ENCODE measurements at regions of chr16 and their contacts with region 1.

Region 1: GRCh38 chr16:68040507-68041288 is 17.6 kb downstream of the DUS2 start:
- DNase-seq: peak; percentile 92
- ATAC-seq: peak; percentile 99
- H3K4me3 Mint-ChIP-seq: no peak overlapping the region
- H3K27ac Mint-ChIP-seq: peak overlapping the region; percentile 81
- H3K4me1 Mint-ChIP-seq: peaks cover 31% of the 10 kb centered on the region
- H3K27me3 Mint-ChIP-seq: no peaks in the 10 kb centered on the region

Region 2: GRCh38 chr16:67942200-67942509 is 98.5 kb before region 1 on chr16:
- CTCF ChIA-PET with region 1: interaction called, 13 read pairs
- DNase-seq: peak; percentile 59
- ATAC-seq: peak; percentile 60
- H3K4me3 Mint-ChIP-seq: no peak overlapping the region
- H3K27ac Mint-ChIP-seq: no peak overlapping the region
- H3K4me1 Mint-ChIP-seq: peaks cover 30% of the 10 kb centered on the region
- H3K27me3 Mint-ChIP-seq: no peaks in the 10 kb centered on the region

Region 3: GRCh38 chr16:67993189-67994039 is 47.3 kb before region 1 on chr16:
- CTCF ChIA-PET with region 1: interaction called, 22 read pairs
- DNase-seq: peak; percentile 88
- ATAC-seq: peak; percentile 91
- H3K4me3 Mint-ChIP-seq: peak overlapping the region; percentile 63
- H3K27ac Mint-ChIP-seq: peak overlapping the region; percentile 96
- H3K4me1 Mint-ChIP-seq: peaks cover 34% of the 10 kb centered on the region
- H3K27me3 Mint-ChIP-seq: no peaks in the 10 kb centered on the region

Region 4: GRCh38 chr16:68022704-68023522 is 17.8 kb before region 1 on chr16 and contains the starts of genes DDX28 and DUS2:
- CTCF ChIA-PET with region 1: interaction called, 20 read pairs
- DNase-seq: peak; percentile 95
- ATAC-seq: peak; percentile 96
- H3K4me3 Mint-ChIP-seq: peak within 1 kb of the TSS; percentile 93
- H3K27ac Mint-ChIP-seq: peak within 1 kb of the TSS; percentile 91
- H3K4me1 Mint-ChIP-seq: peaks cover 36% of the 10 kb centered on the region
- H3K27me3 Mint-ChIP-seq: no peaks in the 10 kb centered on the region
- total RNA-seq, gene DDX28: 14.8 to 20.8 TPM
- total RNA-seq, gene DUS2: 28.4 to 32.0 TPM

Region 5: DNA sequence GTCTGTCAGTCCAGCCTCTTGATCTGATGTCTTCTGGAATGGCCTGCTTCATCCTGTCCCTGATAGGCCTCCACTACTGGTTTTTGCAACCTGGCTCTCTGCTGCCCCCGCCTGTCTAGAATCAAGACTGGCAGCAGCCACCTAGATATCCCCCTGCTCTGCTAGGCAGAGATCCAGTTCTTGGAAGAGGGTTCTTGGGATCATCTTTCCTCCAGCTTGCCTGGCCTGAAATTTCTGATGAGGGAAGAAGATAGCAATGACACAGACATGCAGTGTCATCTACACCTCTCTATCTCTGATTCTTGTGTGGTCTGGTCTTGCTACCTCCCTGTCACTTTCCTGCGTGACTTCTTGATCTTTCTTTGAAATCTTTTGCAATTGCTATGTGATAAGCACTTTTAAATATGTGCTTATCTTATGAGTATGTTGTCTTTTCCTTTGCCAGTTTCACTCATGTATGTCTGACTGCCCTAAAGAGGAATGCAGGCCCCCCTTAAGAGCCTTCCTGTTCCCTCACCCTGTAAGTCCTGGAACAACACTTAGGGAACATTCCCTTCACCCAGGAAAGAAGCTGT is 24.2 kb after region 1 on chr16:
- CTCF ChIA-PET with region 1: interaction called, 21 read pairs
- DNase-seq: peak; percentile 88
- ATAC-seq: peak; percentile 76
- H3K4me3 Mint-ChIP-seq: no peak overlapping the region
- H3K27ac Mint-ChIP-seq: peak overlapping the region; percentile 88
- H3K4me1 Mint-ChIP-seq: peaks cover 81% of the 10 kb centered on the region
- H3K27me3 Mint-ChIP-seq: no peaks in the 10 kb centered on the region

Region 6: GRCh38 chr16:68332411-68333121 is 291.9 kb after region 1 on chr16:
- CTCF ChIA-PET with region 1: no interaction called
- DNase-seq: no peak
- ATAC-seq: no peak
- H3K4me3 Mint-ChIP-seq: no peak overlapping the region
- H3K27ac Mint-ChIP-seq: peak overlapping the region; percentile 73
- H3K4me1 Mint-ChIP-seq: peaks cover 20% of the 10 kb centered on the region
- H3K27me3 Mint-ChIP-seq: no peaks in the 10 kb centered on the region